ENCODE measurements at regions of chr4 and their contacts with region 1.

Region 1: GRCh38 chr4:186191200-186192065 is at the start of gene CYP4V2:
- DNase-seq: peak; percentile 82 to 87 (median 84)
- H3K4me3 ChIP-seq: peak within 1 kb of the TSS; percentile 79
- H3K27ac ChIP-seq: peak within 1 kb of the TSS; percentile 95 to 97
- H3K4me1 ChIP-seq: peaks cover 6% of the 10 kb centered on the region
- H3K27me3 ChIP-seq: no peaks in the 10 kb centered on the region
- CTCF ChIP-seq: peak in 2 of 3 donors; percentile 33 to 47
- EP300 ChIP-seq: no peak
- POLR2A ChIP-seq: peak; percentile 57
- total RNA-seq, gene CYP4V2: 11.9 to 35.3 (median 21.0) TPM

Region 2: GRCh38 chr4:186132577-186133242 is 58.7 kb before region 1 on chr4:
- intact Hi-C with region 1: no loop called
- DNase-seq: no peak
- H3K4me3 ChIP-seq: no peak overlapping the region
- H3K27ac ChIP-seq: no peak overlapping the region
- H3K4me1 ChIP-seq: no peaks in the 10 kb centered on the region
- H3K27me3 ChIP-seq: no peaks in the 10 kb centered on the region
- CTCF ChIP-seq: no peak
- EP300 ChIP-seq: no peak
- POLR2A ChIP-seq: no peak

Region 3: GRCh38 chr4:186144142-186144955 is 47.1 kb before region 1 on chr4:
- intact Hi-C with region 1: loop called in 2 of 4 experiments (anchors 2 to 10 kb)
- DNase-seq: peak; percentile 59 to 80 (median 75)
- H3K4me3 ChIP-seq: peak overlapping the region; percentile 57
- H3K27ac ChIP-seq: peak overlapping the region; percentile 78 to 88
- H3K4me1 ChIP-seq: peaks cover 1% of the 10 kb centered on the region
- H3K27me3 ChIP-seq: no peaks in the 10 kb centered on the region
- CTCF ChIP-seq: peak in 1 of 3 donors; percentile 8
- EP300 ChIP-seq: no peak
- POLR2A ChIP-seq: no peak

Region 4: DNA sequence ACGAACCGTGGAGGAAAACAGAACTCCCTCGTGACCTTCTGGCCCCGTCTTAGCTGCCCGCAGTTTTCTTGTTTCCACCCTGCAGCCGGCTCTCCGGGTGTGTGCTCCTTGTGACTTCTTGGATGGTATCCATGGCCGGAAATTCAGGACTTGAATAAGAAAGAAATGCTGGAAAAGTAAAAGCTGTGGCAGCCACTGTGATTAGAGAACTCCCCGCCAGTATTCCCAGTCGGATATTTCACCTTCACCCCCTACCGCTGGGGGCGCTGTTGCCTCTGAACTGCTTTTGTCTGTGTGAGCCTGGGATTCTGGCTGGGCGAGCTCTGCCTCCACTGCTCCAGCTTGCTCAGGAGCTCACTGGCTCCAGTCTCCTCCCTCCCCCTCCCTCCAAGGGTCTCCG is 41.6 kb before region 1 on chr4:
- intact Hi-C with region 1: loop called in 3 of 4 experiments (anchors 2 to 10 kb)
- DNase-seq: peak; percentile 62 to 83 (median 68)
- H3K4me3 ChIP-seq: no peak overlapping the region
- H3K27ac ChIP-seq: peak overlapping the region in 1 of 2 donors; percentile 63
- H3K4me1 ChIP-seq: peaks cover 1% of the 10 kb centered on the region
- H3K27me3 ChIP-seq: no peaks in the 10 kb centered on the region
- CTCF ChIP-seq: peak in 1 of 3 donors; percentile 50
- EP300 ChIP-seq: no peak
- POLR2A ChIP-seq: no peak